Activated naive CD4-positive, alpha-beta T cell treated with anti-CD3 and anti-CD28 coated beads for 36 hours (primary cell): ENCODE measurements at regions of chr19 and their contacts with region 1.

Region 1: DNA sequence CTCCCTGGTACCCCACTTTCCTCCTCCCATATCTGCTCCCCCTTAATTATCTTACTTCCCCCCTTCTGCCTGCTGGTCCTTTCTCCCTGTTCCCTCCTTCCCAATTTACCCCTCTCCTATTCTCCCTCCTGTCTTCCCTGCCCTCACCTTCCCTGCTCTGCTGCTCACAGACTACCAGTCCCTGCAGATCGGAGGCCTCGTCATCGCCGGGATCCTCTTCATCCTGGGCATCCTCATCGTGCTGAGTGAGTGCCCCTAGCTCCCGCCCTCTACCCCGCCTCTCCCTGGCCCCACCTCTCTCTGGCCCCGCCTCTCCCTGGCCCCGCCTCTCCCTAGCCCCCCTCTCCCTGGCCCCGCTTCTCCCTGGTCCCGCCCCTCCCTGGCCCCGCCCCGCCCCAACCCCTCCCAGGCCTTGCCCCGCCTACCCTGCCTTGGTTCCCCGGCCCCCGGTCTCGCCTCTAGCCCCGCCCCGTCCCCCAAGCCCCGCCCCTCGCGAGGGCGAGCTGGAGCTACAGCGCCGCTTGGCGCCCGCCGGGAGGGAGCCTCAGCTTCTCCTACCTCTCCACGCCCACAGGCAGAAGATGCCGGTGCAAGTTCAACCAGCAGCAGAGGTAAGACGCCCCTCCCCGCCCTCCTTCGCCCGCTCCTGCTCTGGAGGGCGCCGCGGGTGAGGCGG is 2.0 kb upstream of the FXYD7 start:
- DNase-seq: peak; percentile 98
- H3K4me3 Mint-ChIP-seq: peak overlapping the region; percentile 74
- H3K27ac Mint-ChIP-seq: no peak overlapping the region
- H3K4me1 Mint-ChIP-seq: peaks cover 30% of the 10 kb centered on the region
- H3K27me3 Mint-ChIP-seq: peaks cover 4% of the 10 kb centered on the region

Region 2: GRCh38 chr19:34974646-34975045 is 166.5 kb before region 1 on chr19:
- CTCF ChIA-PET with region 1: no interaction called
- intact Hi-C with region 1: loop called (anchors 2 kb)
- DNase-seq: no peak
- H3K4me3 Mint-ChIP-seq: no peak overlapping the region
- H3K27ac Mint-ChIP-seq: no peak overlapping the region
- H3K4me1 Mint-ChIP-seq: peaks cover 24% of the 10 kb centered on the region
- H3K27me3 Mint-ChIP-seq: no peaks in the 10 kb centered on the region

Region 3: GRCh38 chr19:35013031-35013819 is 127.9 kb before region 1 on chr19:
- CTCF ChIA-PET with region 1: no interaction called
- intact Hi-C with region 1: no loop called
- DNase-seq: peak; percentile 87
- H3K4me3 Mint-ChIP-seq: peak overlapping the region; percentile 60
- H3K27ac Mint-ChIP-seq: peak overlapping the region; percentile 90
- H3K4me1 Mint-ChIP-seq: peaks cover 57% of the 10 kb centered on the region
- H3K27me3 Mint-ChIP-seq: no peaks in the 10 kb centered on the region

Region 4: DNA sequence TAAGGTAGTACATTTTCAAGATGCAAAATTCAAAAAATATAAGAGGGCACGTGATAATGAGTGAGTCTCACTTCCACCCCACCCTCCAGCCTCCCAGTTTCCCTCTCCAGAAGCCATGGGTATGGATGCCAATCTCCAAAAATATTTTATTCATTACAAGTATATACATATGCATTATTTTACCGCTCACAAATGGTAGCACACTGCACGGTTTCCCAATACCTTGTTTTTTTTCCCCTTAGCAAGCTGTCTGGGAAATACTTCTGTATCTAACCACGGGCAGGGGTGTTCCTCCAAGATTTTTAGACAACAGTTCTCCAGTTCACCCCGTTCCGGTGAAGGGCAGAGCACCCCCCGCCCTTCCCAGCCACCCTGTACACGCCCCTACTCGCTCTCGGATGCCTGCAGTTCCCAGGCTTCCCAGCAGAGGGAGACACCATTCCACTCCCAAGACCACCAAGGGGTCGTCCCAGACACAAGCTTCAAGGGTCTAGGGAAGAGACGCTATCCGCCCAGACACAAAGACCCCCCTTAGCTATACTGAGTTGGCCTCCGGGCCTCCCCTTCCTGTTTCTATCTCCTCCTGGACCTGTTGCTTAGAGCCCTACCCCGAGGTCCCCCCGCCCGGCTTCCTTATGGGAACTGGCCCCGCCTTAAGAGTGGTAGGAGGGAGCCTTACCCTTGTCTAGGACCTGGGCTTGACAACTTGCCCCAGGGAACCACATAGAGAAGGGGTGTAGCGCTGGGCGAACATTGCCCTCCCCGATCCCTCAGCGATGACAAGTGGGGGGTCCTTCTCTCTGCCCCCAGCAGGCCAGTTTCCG is 26.5 kb before region 1 on chr19:
- CTCF ChIA-PET with region 1: interaction called, 13 read pairs
- intact Hi-C with region 1: loop called (anchors 2 kb)
- DNase-seq: peak; percentile 78
- H3K4me3 Mint-ChIP-seq: no peak overlapping the region
- H3K27ac Mint-ChIP-seq: no peak overlapping the region
- H3K4me1 Mint-ChIP-seq: peaks cover 4% of the 10 kb centered on the region
- H3K27me3 Mint-ChIP-seq: no peaks in the 10 kb centered on the region

Region 5: GRCh38 chr19:35154525-35155406 is 13.7 kb after region 1 on chr19 and contains the start of gene FXYD5:
- CTCF ChIA-PET with region 1: interaction called, 35 read pairs
- intact Hi-C with region 1: loop called (anchors 1 kb)
- DNase-seq: peak; percentile 93
- H3K4me3 Mint-ChIP-seq: peak within 1 kb of the TSS; percentile 98
- H3K27ac Mint-ChIP-seq: peak within 1 kb of the TSS; percentile 99
- H3K4me1 Mint-ChIP-seq: peaks cover 47% of the 10 kb centered on the region
- H3K27me3 Mint-ChIP-seq: no peaks in the 10 kb centered on the region
- total RNA-seq, gene FXYD5: 289 to 294 TPM

Region 6: DNA sequence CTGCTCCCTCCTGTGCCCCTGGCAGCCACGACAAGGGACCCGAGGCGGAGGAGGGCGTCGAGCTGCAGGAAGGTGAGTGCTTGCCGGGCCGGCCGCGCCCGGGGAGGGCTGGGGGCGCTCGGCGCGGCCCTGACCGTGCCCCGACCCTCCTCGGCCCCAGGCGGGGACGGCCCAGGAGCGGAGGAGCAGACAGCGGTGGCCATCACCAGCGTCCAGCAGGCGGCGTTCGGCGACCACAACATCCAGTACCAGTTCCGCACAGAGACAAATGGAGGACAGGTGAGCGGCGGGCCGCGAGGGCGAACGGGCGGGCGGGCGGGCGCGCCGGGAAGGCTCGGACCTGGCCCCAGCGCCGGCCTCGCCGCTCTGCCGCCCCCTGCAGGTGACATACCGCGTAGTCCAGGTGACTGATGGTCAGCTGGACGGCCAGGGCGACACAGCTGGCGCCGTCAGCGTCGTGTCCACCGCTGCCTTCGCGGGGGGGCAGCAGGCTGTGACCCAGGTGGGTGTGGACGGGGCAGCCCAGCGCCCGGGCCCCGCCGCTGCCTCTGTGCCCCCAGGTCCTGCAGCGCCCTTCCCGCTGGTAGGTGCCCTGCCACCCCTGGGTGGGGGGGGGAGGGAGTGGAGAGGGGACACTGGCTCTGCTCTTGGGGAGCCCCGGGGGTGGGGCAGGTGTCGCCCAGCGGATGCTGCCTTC is 128.5 kb after region 1 on chr19:
- CTCF ChIA-PET with region 1: interaction called, 4 read pairs
- intact Hi-C with region 1: loop called (anchors 1 kb)
- DNase-seq: peak; percentile 86
- H3K4me3 Mint-ChIP-seq: peak overlapping the region; percentile 70
- H3K27ac Mint-ChIP-seq: peak overlapping the region; percentile 66
- H3K4me1 Mint-ChIP-seq: peaks cover 28% of the 10 kb centered on the region
- H3K27me3 Mint-ChIP-seq: no peaks in the 10 kb centered on the region